ENCODE measurements at regions of chr5 and their contacts with region 1.

Region 1: GRCh38 chr5:119554597-119554996 is 74.8 kb upstream of the FAM170A start:
- DNase-seq: no peak
- H3K4me3 Mint-ChIP-seq: no peak overlapping the region
- H3K27ac Mint-ChIP-seq: no peak overlapping the region
- H3K4me1 Mint-ChIP-seq: no peaks in the 10 kb centered on the region
- H3K27me3 Mint-ChIP-seq: peaks cover 3% of the 10 kb centered on the region

Region 2: GRCh38 chr5:119522841-119523240 is 31.8 kb before region 1 on chr5:
- CTCF ChIA-PET with region 1: no interaction called
- intact Hi-C with region 1: loop called (anchors 2 kb)
- DNase-seq: no peak
- H3K4me3 Mint-ChIP-seq: no peak overlapping the region
- H3K27ac Mint-ChIP-seq: no peak overlapping the region
- H3K4me1 Mint-ChIP-seq: no peaks in the 10 kb centered on the region
- H3K27me3 Mint-ChIP-seq: no peaks in the 10 kb centered on the region

Region 3: DNA sequence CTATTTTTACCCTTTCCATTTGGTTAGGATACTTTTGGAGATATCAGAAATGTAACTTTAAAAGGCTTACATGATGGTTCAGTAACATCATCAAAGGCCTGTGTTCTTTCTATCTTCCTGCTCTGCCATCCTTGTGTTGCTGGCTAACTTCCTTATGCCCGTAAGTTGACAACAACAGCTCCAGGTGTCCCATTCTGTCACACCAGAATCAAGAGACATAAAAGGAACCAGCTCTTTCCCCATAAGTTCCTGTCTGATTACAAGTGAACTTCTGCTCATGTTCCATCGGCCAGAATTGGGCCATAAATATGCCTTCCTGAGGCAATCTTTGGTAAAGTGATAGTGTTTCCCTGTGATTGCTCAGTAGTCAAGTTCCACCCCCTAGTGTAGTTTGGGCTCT is 167.2 kb after region 1 on chr5:
- CTCF ChIA-PET with region 1: no interaction called
- intact Hi-C with region 1: no loop called
- DNase-seq: no peak
- H3K4me3 Mint-ChIP-seq: no peak overlapping the region
- H3K27ac Mint-ChIP-seq: no peak overlapping the region
- H3K4me1 Mint-ChIP-seq: no peaks in the 10 kb centered on the region
- H3K27me3 Mint-ChIP-seq: no peaks in the 10 kb centered on the region

Measured in activated naive CD4-positive, alpha-beta T cell treated with anti-CD3 and anti-CD28 coated beads for 36 hours (primary cell).